ENCODE measurements at regions of chr4 and their contacts with region 1.

Region 1: GRCh38 chr4:159227984-159228383 is 125.1 kb downstream of the RAPGEF2 start:
- DNase-seq: peak; percentile 70
- H3K4me3 ChIP-seq: peak overlapping the region; percentile 34 to 82 (median 60)
- H3K27ac ChIP-seq: peak overlapping the region; percentile 94
- H3K4me1 ChIP-seq: peaks cover 22% of the 10 kb centered on the region
- H3K27me3 ChIP-seq: no peaks in the 10 kb centered on the region
- CTCF ChIP-seq: peak in 1 of 2 donors; percentile 35

Region 2: GRCh38 chr4:158796370-158797140 is 431.4 kb before region 1 on chr4:
- CTCF ChIA-PET with region 1: no interaction called
- dilution Hi-C with region 1: no loop called
- in situ Hi-C with region 1: no loop called
- intact Hi-C with region 1: no loop called
- DNase-seq: peak; percentile 58
- H3K4me3 ChIP-seq: no peak overlapping the region
- H3K27ac ChIP-seq: no peak overlapping the region
- H3K4me1 ChIP-seq: peaks cover 9% of the 10 kb centered on the region
- H3K27me3 ChIP-seq: no peaks in the 10 kb centered on the region
- CTCF ChIP-seq: no peak

Region 3: DNA sequence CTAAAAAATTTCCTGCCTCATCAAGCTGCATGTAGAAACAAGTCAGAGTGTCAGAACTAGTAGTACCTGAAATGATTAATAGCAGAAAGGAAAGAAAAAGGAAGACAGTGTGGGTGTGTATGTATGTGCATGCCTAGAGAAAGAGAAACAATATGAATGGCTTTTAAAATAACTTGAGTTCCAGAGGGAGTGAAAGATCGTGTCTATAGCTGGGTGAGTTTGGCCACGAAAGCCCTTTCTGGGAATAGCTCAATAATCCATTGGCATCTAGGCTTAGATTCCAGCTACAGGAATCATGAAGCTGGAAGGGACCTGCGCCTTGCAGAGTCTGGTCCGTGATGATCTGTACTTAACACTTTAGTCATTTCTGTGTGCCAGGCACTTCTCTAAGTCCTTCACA is 70.5 kb after region 1 on chr4:
- CTCF ChIA-PET with region 1: no interaction called
- dilution Hi-C with region 1: no loop called
- in situ Hi-C with region 1: no loop called
- intact Hi-C with region 1: loop called (anchors 5 kb)
- DNase-seq: peak; percentile 84
- H3K4me3 ChIP-seq: peak overlapping the region; percentile 46 to 79 (median 72)
- H3K27ac ChIP-seq: peak overlapping the region; percentile 81
- H3K4me1 ChIP-seq: peaks cover 38% of the 10 kb centered on the region
- H3K27me3 ChIP-seq: no peaks in the 10 kb centered on the region
- CTCF ChIP-seq: no peak

Region 4: DNA sequence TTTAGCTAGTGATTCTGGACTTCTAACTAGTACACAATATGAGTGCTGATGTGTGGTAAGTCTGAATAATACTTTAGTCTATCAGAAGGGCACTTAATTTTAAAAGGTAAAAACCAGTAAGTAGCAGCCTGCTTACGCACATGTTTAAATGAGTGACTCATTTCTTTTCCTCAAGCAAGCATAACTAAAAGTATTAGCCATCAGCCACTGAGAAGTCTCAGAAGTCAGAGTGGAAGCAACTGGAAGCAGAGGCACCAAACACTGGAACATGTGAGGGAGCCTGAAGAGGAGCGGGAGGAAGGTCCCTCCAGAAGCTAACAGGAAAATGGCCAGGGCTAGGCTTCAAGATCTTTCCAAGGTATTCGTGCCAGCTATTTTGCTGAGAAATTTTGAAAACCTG is 132.6 kb after region 1 on chr4:
- CTCF ChIA-PET with region 1: no interaction called
- dilution Hi-C with region 1: no loop called
- in situ Hi-C with region 1: no loop called
- intact Hi-C with region 1: no loop called
- DNase-seq: peak; percentile 76
- H3K4me3 ChIP-seq: no peak overlapping the region
- H3K27ac ChIP-seq: no peak overlapping the region
- H3K4me1 ChIP-seq: peaks cover 28% of the 10 kb centered on the region
- H3K27me3 ChIP-seq: no peaks in the 10 kb centered on the region
- CTCF ChIP-seq: no peak

Measured in mammary epithelial cell (primary cell).